T-cell (primary cell): ENCODE measurements at regions of chr4 and their contacts with region 1.

Region 1: DNA sequence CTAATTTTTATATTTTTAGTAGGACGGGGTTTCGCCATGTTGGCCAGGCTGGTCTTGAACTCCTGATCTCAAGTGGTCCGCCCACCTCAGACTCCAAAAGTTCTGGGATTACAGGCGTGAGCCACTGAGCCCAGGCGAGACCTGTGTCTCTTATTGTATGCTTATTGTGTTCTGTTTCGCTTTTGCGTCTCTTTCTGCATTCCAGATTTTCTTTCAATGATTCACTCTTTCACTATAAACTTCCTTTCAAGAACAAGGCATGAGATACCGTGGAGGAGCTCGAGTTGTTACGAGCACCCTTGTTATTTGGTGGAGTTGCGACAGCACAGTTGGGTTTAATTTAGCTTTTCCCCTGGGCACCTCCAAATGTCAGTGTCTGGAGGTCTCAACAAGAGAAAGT is 366.7 kb upstream of the FAT1 start:
- DNase-seq: no peak
- ATAC-seq: no peak
- H3K4me3 ChIP-seq: no peak overlapping the region
- H3K4me3 Mint-ChIP-seq: no peak overlapping the region
- H3K27ac ChIP-seq: no peak overlapping the region
- H3K27ac Mint-ChIP-seq: no peak overlapping the region
- H3K4me1 ChIP-seq: no peaks in the 10 kb centered on the region
- H3K4me1 Mint-ChIP-seq: no peaks in the 10 kb centered on the region
- H3K27me3 ChIP-seq: no peaks in the 10 kb centered on the region
- H3K27me3 Mint-ChIP-seq: no peaks in the 10 kb centered on the region

Region 2: DNA sequence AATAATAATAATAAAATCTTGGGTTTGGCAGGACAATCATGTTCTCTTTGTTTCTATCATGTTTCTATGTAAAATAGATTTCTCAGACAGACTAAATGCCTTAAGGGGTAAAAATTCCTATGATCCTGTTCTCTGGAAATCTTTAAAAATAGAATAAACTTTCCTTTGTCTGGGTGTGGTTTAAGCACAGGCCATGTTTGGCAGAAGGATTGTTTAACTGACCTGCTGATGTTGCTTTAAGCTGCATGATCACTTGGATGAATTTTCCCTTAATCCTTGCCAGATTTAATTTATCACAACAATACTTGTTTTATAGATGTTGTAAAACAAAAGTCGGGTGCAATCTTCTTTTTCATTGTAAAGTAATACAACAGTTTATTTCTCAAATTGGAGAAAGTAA is 25.0 kb before region 1 on chr4:
- CTCF ChIA-PET with region 1: interaction called in 1 of 2 experiments, 10 read pairs
- POLR2A ChIA-PET with region 1: interaction called in 1 of 2 experiments, 3 read pairs
- DNase-seq: no peak
- ATAC-seq: no peak
- H3K4me3 ChIP-seq: no peak overlapping the region
- H3K4me3 Mint-ChIP-seq: no peak overlapping the region
- H3K27ac ChIP-seq: no peak overlapping the region
- H3K27ac Mint-ChIP-seq: no peak overlapping the region
- H3K4me1 ChIP-seq: no peaks in the 10 kb centered on the region
- H3K4me1 Mint-ChIP-seq: no peaks in the 10 kb centered on the region
- H3K27me3 ChIP-seq: no peaks in the 10 kb centered on the region
- H3K27me3 Mint-ChIP-seq: no peaks in the 10 kb centered on the region